ENCODE measurements at regions of chr3 and their contacts with region 1.

Region 1: GRCh38 chr3:106609666-106610301 is 741.0 kb upstream of the CBLB start:
- DNase-seq: peak; percentile 50
- H3K4me3 Mint-ChIP-seq: no peak overlapping the region
- H3K27ac Mint-ChIP-seq: peak overlapping the region; percentile 66
- H3K4me1 Mint-ChIP-seq: peaks cover 30% of the 10 kb centered on the region
- H3K27me3 Mint-ChIP-seq: no peaks in the 10 kb centered on the region

Region 2: DNA sequence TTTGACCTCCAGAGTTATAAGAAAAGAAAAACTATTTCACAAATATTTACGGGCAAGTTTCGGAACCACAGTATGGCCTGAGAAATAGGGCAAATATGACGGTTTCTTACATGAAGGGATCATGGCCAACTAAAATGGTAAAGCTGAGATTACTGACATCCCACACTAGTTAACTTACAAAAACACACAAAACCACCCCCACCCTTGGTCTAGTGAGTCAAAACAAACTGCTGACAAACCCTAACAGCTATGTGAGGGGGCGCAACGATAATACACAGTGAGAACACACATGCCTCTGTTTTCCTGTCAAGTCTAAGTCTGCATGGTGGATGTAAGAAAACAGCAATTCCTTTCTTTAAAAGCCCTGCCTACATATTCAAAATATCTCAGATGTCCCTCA is 773.3 kb before region 1 on chr3:
- intact Hi-C with region 1: loop called (anchors 5 kb)
- DNase-seq: peak; percentile 27
- H3K4me3 Mint-ChIP-seq: peak overlapping the region; percentile 71
- H3K27ac Mint-ChIP-seq: peak overlapping the region; percentile 93
- H3K4me1 Mint-ChIP-seq: peaks cover 85% of the 10 kb centered on the region
- H3K27me3 Mint-ChIP-seq: no peaks in the 10 kb centered on the region

Region 3: GRCh38 chr3:106232956-106233355 is 376.8 kb before region 1 on chr3:
- intact Hi-C with region 1: loop called (anchors 5 kb)
- DNase-seq: no peak
- H3K4me3 Mint-ChIP-seq: no peak overlapping the region
- H3K27ac Mint-ChIP-seq: peak overlapping the region; percentile 46
- H3K4me1 Mint-ChIP-seq: peaks cover 46% of the 10 kb centered on the region
- H3K27me3 Mint-ChIP-seq: no peaks in the 10 kb centered on the region

Region 4: DNA sequence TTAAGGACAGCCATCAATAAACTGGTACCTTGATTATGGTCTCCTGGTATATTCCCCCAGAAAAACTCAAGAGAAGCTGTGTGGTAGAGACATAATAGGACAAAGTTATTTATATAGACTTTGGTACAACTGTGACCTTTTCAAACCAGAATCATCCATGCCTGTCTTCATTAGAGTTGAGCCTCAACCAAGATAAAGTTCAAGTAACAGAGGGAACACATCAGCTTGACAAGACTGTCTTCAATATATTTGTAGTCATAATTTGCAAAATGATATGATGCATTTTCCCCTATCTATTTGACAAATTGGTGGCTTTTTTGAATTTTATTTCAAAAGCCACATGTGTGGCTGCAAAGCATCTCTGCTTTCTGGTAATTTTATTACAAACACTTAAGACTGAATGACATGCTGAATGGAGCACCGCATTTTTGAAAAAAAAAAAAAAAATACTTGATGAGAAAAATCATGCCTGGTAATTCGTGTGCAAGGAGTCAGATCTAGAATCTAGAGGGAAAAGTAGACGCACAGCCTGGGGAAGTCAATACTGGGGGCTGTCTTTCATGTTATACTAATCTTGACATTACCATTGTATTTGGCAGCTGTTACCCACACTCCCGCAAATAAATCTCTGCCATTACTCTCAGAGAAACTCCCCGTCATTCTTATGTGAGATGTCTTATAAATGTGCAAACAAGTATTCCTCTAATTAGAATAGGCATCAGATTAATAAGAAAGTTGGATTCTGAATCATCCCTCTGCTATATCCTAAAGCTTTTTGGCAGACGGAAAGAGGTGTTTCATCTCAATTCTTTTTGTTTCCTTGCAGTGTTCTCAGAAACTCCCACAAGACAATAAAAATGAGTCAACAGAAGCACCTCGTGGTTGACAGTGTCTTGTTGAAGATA is 186.2 kb before region 1 on chr3:
- intact Hi-C with region 1: loop called (anchors 1 kb)
- DNase-seq: no peak
- H3K4me3 Mint-ChIP-seq: peak overlapping the region; percentile 45
- H3K27ac Mint-ChIP-seq: peak overlapping the region; percentile 90
- H3K4me1 Mint-ChIP-seq: peaks cover 50% of the 10 kb centered on the region
- H3K27me3 Mint-ChIP-seq: no peaks in the 10 kb centered on the region

Region 5: DNA sequence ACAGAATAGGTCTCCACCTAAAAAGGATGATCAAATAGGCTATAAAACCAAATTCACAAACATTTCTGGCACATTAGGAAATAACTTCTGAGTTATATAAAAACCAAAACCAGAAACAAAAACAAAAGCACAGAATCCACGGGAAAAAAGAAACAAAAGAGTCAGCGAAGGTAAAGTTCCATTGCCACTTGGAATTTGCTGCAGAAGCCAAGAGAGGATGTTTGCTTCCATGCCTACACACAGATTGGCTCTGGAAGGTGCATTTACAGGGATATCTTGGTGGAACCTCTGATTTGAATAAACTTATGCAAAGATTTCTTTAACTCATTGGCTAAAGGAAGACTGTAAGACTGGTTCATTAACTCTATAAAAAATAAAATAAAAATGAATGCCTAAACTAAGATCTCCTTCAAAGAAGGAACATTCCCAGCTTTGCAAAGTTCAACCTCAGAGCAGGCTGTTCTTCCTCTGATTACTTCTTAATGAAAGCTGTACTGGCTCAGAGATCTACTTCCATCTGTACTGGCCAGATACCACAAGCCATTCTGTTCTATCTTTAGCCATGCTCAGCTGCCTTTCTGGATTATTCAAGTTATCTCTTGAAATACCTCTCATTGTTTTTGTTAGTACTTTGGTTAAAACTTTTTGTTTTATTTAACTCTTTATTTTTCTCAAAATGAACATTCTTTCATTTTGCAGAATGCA is 229.9 kb after region 1 on chr3:
- intact Hi-C with region 1: no loop called
- DNase-seq: no peak
- H3K4me3 Mint-ChIP-seq: no peak overlapping the region
- H3K27ac Mint-ChIP-seq: no peak overlapping the region
- H3K4me1 Mint-ChIP-seq: no peaks in the 10 kb centered on the region
- H3K27me3 Mint-ChIP-seq: peaks cover 2% of the 10 kb centered on the region

Region 6: DNA sequence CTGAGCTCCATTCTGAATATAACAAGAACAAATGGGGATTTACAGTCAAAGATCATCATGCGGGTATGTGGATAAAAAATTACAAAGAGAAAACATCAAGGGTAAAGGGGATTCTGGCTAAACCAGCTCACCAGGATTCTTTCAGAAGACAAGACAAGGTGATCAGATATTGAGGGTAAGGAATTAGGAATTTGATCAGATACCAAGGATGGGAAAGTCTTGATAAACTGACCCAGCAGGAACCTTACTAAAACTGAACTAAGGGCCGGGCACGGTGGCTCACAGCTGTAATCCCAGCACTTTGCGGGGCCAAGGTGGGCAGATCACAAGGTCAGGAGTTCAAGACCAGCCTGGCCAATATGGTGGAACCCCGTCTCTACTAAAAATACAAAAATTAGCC is 254.2 kb after region 1 on chr3:
- intact Hi-C with region 1: no loop called
- DNase-seq: no peak
- H3K4me3 Mint-ChIP-seq: no peak overlapping the region
- H3K27ac Mint-ChIP-seq: no peak overlapping the region
- H3K4me1 Mint-ChIP-seq: no peaks in the 10 kb centered on the region
- H3K27me3 Mint-ChIP-seq: no peaks in the 10 kb centered on the region

Region 7: GRCh38 chr3:107064445-107065060 is 454.8 kb after region 1 on chr3:
- intact Hi-C with region 1: loop called (anchors 1 kb)
- DNase-seq: peak; percentile 29
- H3K4me3 Mint-ChIP-seq: no peak overlapping the region
- H3K27ac Mint-ChIP-seq: no peak overlapping the region
- H3K4me1 Mint-ChIP-seq: peaks cover 24% of the 10 kb centered on the region
- H3K27me3 Mint-ChIP-seq: peaks cover 5% of the 10 kb centered on the region

Measured in activated T-helper 1 cell treated with anti-CD3 and anti-CD28 coated beads, Interleukin-12 subunit alpha, Interleukin-12 subunit beta, Interleukin-2, Interleukin-4 antibody, amounts not matched to agents 30 ng/mL and 10 ng/mL and 1 ng/mL, durations not matched to agents 14 hours and 24 hours and 36 hours (primary cell).